Dendritic cell treated with granulocyte-macrophage colony-stimulating factor and Interleukin-4, amounts not matched to agents 40 ng/mL and 50 ng/mL, for 4 days (primary cell): ENCODE measurements at regions of chr20 and their contacts with region 1.

Region 1: DNA sequence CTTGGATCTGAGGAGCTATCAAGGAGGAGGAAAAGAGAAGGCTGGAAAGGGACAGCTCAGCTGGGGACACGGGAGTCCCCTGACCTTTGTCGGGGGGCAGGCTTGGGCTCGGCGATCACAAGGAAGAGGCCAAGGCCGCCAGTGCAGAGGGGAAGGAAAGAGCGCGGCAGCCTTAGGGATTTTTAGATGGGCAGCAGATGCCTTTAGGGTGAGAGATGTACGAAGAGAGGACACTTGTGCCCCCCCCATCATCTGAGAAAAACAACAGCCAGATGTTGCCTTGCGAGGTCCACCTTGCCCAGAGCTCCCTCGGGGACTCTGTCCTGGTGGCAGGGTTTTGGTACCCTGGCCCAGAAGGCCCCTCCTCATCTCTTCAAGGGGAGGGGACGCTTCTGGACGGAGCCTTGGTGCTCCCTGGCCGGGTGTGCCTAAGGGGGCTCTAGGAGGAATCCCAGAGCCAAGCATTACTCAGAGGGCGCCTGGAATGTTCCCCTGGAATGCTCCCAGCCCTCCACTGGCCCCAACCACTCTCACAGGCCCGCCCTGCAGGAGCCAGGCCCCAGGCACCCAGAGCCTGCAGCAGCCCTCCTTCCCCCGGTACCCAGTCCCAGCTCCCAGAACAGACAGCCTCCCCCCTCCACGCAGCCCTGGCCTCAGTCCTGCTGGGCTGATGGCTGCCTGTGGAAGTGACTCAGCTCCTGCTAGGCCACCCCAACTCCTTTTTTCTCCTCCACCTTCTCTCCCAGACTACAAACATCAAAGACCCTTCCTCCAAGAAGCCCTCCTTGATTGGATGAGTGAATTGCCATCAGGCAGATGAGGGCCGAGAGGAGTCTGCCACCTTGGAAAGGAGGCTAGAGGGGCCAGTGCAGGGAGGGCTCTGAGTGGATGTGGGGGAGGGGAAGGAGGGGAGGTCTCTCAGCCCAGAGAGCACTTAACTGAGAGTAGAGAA is 1.8 kb downstream of the ADAM33 start:
- H3K4me3 Mint-ChIP-seq: no peak overlapping the region
- H3K27ac Mint-ChIP-seq: peak overlapping the region; percentile 0
- H3K4me1 Mint-ChIP-seq: peaks cover 14% of the 10 kb centered on the region
- H3K27me3 Mint-ChIP-seq: peaks cover 88% of the 10 kb centered on the region

Region 2: DNA sequence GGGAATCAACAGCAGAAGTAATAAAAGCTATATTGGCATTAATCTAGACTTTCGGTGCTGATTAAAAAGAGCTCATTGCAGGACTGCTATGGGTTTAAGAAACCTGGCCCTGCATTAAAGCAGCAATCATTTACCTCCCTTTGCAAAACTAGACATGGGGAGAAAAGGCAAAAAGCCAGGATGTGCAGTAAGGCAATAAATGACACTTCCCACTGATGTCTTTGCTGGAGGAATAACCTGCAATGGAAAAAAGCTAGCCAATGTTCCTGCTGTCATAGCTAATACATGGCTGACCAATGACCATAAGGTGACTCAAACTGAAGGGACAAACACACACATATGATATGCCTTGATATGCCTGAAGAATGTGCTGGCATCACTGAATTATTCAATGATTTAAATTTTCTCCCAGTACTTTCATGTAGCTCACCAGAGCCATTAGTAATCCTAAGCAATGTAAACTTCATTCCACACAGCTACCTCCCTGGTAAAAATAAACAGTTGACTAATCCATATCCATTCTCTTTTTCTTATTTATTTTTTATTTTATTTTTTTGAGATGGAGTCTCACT is 281.3 kb before region 1 on chr20:
- intact Hi-C with region 1: no loop called
- H3K4me3 Mint-ChIP-seq: no peak overlapping the region
- H3K27ac Mint-ChIP-seq: no peak overlapping the region
- H3K4me1 Mint-ChIP-seq: peaks cover 42% of the 10 kb centered on the region
- H3K27me3 Mint-ChIP-seq: no peaks in the 10 kb centered on the region

Region 3: GRCh38 chr20:3710703-3711483 is 30.9 kb after region 1 on chr20:
- intact Hi-C with region 1: loop called (anchors 1 kb)
- H3K4me3 Mint-ChIP-seq: peak overlapping the region; percentile 92
- H3K27ac Mint-ChIP-seq: peak overlapping the region; percentile 80
- H3K4me1 Mint-ChIP-seq: peaks cover 80% of the 10 kb centered on the region
- H3K27me3 Mint-ChIP-seq: peaks cover under 1% of the 10 kb centered on the region

Region 4: DNA sequence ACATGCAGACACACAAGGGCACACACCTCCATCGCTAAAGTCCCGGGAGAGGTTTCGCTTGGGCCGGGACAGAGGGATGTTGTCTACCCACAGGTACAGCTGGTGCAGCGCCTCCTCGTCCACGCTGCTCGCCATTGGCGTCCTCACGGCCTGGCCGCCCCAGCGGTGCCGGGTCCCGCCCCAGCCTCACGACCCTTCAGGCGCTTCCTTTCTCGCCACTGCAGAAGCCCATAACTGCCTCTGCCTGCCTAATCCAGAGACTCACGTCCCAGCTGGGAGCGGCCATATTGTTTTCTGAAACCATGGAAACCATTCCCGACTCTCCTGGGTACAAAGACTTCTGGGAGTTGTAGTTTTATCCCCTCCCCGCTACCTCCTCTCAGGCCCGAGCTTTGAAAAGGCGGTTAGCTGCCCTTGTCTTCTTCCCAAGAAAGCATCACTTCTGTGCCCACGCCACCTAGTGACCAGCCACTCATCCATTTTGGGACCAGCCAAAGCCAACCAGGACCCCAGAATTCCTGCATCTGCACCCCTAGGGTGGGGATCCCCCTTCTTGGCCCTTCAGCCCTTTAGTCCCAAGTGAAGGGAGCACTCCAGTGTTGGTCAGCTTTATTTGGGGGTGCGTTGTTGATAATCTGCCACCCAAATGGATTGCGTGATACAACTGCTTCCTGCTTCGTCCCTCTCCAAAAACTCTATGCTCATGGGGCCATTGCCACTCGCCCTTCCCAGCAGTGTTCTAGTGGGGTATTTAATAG is 101.3 kb after region 1 on chr20 and contains the start of gene SPEF1:
- intact Hi-C with region 1: loop called (anchors 2 kb)
- H3K4me3 Mint-ChIP-seq: peak within 1 kb of the TSS; percentile 61
- H3K27ac Mint-ChIP-seq: peak within 1 kb of the TSS; percentile 51
- H3K4me1 Mint-ChIP-seq: peaks cover 82% of the 10 kb centered on the region
- H3K27me3 Mint-ChIP-seq: peaks cover 22% of the 10 kb centered on the region